Right ventricle myocardium inferior (tissue), 1 donor: ENCODE measurements at regions of chr7 and their contacts with region 1.

Region 1: DNA sequence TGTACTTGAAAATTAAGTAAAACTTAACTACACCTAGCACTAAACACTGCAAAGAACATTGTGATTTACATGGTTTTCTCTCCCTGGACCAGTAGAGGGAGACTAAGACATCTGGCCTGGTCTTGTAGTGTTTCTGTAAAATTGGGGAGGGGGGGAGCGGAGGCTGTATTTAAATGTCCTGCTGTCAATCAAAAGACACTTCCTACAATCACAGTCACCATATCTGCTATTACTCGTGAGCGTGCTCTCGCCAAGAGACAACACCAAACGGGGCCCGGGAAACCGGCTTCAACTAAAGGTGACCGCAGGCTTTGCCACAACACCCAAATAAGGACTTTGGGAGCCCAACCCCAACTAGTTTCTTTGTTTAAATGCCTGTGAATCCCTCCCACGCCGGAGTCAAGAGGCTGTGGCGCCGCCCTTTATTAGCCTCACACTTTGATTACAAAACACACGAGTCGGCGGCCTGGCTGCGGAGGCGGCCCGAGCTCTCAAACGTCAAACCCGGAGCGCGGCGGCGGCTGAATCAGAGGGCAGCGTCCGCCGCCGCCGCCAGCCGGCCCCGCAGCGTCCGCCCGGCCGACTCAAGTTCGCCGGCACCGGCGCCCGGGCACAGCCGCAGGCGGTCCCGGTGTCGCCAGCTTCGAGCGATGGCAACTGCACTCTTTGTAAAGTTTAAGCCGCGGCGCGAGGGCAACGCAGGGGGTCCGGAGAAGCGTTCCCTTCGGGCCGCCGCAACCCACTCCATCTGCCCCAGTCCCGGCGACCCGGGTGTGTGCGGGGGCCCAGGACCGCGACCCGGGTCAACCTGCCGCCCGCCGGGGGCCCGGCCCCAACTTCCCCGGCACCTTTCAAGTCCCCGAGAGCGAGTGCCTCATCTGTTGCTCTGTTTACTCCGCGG is 1.3 kb downstream of the KDM7A start:
- DNase-seq: peak; percentile 97
- ATAC-seq: peak; percentile 81

Region 2: GRCh38 chr7:139359366-139360209 is 815.9 kb before region 1 on chr7 and contains the start of gene LUC7L2:
- intact Hi-C with region 1: loop called (anchors 5 kb)
- DNase-seq: peak; percentile 100
- ATAC-seq: peak; percentile 97
- total RNA-seq, gene LUC7L2: 44.9 TPM

Region 3: GRCh38 chr7:140041659-140042385 is 133.6 kb before region 1 on chr7:
- intact Hi-C with region 1: no loop called
- DNase-seq: no peak
- ATAC-seq: no peak

Region 4: DNA sequence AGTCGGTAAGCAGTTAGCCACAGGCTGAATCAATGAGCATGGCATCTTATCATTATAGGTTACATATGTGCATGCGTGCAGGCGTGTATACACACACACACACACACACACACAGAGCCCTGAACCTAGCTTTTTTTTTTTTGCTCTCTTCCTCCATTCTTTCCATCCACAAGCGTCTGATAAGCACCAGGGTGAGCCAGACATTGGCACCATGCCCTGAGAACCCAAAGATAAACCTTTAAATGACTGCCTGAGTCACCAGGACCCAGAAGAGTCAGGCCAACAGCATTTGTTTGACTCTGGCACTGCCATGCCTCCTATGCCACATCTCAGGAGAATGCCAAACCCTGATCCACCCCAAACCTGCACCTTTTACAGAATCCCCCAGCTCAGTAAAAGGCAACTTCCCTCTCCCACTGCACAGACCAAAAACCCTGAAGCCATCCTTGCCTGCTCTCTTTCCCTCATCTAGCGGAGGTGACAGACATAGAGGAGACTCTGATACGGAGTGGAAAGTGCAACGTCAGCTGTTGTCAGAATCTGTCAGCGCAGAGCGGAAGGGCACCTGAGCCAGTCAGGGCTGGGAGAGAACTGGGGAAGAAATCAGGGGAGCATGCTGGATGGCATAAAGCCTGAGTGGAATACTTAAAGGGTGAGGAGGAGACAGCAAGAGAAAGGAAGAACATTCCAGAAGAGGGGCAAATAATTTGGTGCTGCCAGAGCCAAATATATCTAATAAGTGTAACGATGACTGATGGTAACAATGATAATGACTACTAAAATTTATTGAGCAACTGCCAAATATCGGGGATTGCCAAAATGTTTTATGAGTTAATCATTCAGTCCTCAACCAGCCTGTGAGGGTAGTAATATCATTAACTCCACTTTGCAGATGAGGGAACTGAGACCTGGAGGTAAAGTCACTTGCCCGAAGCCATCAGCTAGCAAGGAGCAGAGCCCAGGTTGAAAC is 115.9 kb before region 1 on chr7:
- intact Hi-C with region 1: loop called (anchors 2 kb)
- DNase-seq: no peak
- ATAC-seq: peak; percentile 35

Region 5: GRCh38 chr7:140230861-140231770 is 55.6 kb after region 1 on chr7:
- intact Hi-C with region 1: loop called (anchors 5 kb)
- DNase-seq: peak; percentile 77
- ATAC-seq: peak; percentile 65

Region 6: DNA sequence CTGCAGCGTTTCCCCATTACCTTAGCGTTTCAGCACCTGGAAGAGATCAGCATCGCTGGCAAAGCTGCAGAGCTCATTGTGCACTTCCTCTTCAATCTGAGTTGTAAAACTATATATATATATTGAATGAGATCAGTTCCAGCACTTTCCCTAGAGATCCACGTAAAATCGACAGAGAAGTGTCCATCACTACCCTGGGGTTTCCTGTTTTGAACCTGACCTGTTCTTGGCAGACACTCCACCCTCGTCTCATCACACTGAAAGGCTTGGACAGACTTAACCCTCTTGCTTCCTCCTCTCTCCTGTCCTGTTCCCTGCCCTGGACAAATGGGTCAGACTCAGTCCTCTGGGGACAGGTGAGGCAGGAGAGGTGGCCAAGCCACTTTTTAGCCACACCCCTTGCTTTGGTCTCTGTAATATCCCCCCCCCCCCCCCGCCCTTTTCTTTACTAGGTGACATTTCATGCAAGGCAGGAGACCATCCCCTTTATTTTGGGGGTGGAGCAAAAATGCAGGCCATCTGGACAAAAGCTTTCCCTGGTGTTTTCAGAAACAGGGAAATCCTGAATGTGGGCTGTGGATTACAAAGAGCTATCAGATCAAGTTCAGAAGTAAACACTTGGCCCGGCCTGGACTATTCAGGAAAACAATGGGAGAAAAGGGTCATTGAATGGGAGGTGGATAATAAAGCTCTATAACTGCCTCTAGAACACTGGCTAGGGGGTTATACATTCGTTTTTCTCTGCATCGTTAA is 85.1 kb after region 1 on chr7:
- intact Hi-C with region 1: loop called (anchors 5 kb)
- DNase-seq: no peak
- ATAC-seq: peak; percentile 42

Region 7: DNA sequence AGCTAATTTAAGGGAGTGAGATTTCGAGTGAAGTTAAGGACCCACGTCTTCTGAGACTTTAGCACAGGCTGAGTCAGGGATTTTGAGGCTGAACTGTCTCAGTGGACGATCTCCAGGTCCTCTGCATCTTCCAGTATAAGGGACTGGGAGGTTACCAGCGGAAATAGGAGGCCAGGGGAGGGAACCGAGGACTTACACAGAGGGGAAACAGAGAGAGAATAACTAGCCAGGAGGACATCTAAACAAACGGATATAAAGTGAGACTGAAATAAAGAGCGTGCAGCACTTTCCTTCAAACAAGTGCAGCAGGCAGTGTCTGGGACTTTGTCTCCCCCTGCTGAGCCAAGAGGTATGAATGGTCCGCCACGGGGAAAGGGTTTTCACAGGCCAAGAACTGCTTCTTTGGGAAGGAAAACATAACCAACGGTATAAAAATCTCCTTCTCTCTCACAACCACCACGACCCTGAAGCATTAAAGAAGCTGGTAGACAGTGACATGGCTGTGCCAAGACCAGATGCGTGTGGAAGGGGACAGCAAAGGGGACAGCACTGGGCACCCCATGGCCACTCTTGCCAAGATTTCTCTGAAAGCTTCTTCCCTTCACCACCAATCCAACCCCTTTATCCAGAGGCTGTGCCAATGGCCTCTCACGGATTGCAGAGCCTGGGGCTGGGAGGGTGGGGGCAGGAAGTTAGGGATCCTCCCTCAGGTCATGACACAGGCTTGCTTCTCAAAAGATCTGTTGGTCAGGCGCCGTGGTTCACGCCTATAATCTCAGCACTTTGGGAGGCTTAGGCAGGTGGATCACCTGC is 150.9 kb after region 1 on chr7:
- intact Hi-C with region 1: loop called (anchors 5 kb)
- DNase-seq: peak; percentile 72
- ATAC-seq: peak; percentile 86